ENCODE measurements at regions of chr12 and their contacts with region 1.

Region 1: DNA sequence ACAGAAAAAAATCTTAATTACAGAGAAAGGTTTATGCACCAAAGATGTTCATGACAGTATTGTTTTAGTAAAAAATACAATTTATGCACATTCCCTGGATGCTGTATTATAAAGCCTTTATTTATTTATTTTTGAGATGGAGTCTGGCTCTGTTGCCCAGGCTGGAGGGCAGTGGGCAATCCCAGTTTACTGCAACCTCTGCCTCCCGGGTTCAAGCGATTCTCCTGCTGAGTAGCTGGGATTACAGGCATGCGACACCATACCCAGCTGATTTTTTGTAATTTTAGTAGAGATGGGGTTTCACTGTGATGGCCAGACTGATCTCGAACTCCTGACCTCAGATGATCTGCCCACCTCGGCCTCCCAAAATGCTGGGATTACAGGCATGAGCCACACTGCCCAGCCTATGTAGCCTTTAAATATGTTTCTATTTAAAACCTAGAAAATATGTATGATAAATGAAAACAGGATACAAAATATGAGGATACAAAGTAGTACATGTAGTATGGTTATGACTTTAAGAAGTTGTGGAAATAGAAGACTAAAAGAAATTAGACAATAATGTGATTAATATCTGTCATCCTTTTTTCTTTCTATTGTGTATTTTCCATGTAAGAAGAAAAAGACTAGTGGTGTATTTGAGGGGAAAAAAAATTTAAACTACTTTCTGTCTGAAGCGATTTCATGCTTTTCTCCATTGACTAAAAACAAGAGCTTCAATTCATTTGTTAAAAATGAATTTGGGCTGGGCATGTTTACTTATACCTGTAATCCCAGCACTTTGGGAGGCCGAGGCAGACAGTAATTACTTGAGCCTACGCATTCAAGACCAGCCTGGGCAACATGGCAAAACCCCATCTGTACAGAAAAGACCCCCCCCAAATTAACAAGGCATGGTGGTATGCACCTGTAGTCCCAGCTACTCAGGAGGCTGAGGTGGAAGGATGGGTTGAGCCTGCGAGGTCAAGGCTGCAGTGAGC is 13.1 kb downstream of the ATF1 start:
- DNase-seq: no peak
- H3K4me3 Mint-ChIP-seq: no peak overlapping the region
- H3K27ac Mint-ChIP-seq: no peak overlapping the region
- H3K4me1 Mint-ChIP-seq: peaks cover 1% of the 10 kb centered on the region
- H3K27me3 Mint-ChIP-seq: no peaks in the 10 kb centered on the region

Region 2: GRCh38 chr12:50715174-50715573 is 61.9 kb before region 1 on chr12:
- CTCF ChIA-PET with region 1: no interaction called
- POLR2A ChIA-PET with region 1: no interaction called
- DNase-seq: no peak
- H3K4me3 Mint-ChIP-seq: no peak overlapping the region
- H3K27ac Mint-ChIP-seq: no peak overlapping the region
- H3K4me1 Mint-ChIP-seq: no peaks in the 10 kb centered on the region
- H3K27me3 Mint-ChIP-seq: no peaks in the 10 kb centered on the region

Region 3: GRCh38 chr12:50740307-50740706 is 36.7 kb before region 1 on chr12:
- CTCF ChIA-PET with region 1: no interaction called
- POLR2A ChIA-PET with region 1: no interaction called
- DNase-seq: no peak
- H3K4me3 Mint-ChIP-seq: no peak overlapping the region
- H3K27ac Mint-ChIP-seq: no peak overlapping the region
- H3K4me1 Mint-ChIP-seq: no peaks in the 10 kb centered on the region
- H3K27me3 Mint-ChIP-seq: no peaks in the 10 kb centered on the region

Region 4: DNA sequence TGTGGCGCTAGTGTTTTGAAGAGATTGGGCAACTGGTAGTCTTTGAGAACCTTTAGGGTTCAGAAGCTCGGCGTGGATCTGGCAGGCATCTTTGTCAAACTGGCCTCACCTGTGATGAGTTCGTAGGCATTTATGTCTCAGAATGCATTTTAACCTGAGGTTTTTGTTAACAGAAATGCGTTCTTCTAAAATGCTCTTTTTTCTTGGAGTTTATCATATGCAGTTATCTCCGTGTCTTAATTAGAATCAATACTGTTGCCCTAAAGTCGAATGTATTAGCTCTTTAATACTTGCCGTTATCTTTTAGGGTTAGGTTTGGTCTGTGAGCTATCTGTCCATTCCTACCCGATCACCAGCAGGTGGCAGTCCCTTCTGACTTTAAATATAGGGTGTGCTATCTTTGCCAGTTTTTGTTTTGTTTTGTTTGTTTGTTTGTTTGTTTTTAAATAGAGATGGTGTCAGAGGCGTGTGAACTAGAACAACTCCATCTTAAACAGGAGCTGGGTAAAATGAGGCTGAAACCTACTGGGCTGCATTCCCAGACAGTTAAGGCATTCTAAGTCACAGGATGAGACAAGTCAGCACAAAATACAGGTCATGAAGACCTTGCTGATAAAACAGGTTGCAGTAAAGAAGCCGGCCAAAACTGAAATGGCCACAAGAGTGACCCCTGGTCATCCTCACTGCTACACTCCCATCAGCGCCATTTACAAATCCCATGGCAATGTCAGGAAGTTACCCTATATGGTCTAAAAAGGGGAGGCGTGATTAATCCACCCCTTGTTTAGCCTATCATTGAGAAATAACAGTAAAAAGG is 11.7 kb before region 1 on chr12:
- CTCF ChIA-PET with region 1: interaction called, 12 read pairs
- POLR2A ChIA-PET with region 1: no interaction called
- DNase-seq: peak; percentile 70
- H3K4me3 Mint-ChIP-seq: peak overlapping the region; percentile 77
- H3K27ac Mint-ChIP-seq: peak overlapping the region; percentile 87
- H3K4me1 Mint-ChIP-seq: peaks cover 35% of the 10 kb centered on the region
- H3K27me3 Mint-ChIP-seq: no peaks in the 10 kb centered on the region

Region 5: DNA sequence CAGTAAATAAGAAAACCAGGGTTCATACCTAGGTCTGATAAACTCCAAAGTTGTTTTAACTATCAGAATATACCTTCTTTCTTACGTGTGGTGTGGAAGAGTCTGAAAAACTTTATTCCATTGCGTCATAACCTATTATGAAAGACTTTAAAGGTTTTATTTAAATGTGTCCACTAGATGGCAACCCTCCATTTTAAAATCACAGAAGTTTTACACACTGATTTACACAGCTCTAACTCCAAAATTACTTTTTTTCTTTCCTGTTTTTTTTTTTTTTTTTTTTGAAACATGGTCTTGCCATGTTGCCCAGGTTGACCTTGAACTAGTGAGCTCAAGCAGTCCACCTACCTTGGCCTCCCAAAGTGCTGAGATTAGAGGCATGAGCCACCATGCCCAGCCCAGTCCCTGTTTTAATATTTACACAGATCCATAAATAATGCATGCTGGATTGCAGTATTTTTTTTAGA is 48.4 kb after region 1 on chr12:
- CTCF ChIA-PET with region 1: no interaction called
- POLR2A ChIA-PET with region 1: no interaction called
- DNase-seq: no peak
- H3K4me3 Mint-ChIP-seq: no peak overlapping the region
- H3K27ac Mint-ChIP-seq: peak overlapping the region; percentile 33
- H3K4me1 Mint-ChIP-seq: peaks cover 5% of the 10 kb centered on the region
- H3K27me3 Mint-ChIP-seq: no peaks in the 10 kb centered on the region